Endothelial cell of umbilical vein (primary cell): ENCODE measurements at regions of chr11 and their contacts with region 1.

Region 1: GRCh38 chr11:17347676-17348075 is 3.9 kb upstream of the NCR3LG1 start:
- DNase-seq: no peak
- H3K4me3 ChIP-seq: no peak overlapping the region
- H3K27ac ChIP-seq: no peak overlapping the region
- H3K4me1 ChIP-seq: peaks cover 4% of the 10 kb centered on the region
- H3K27me3 ChIP-seq: no peaks in the 10 kb centered on the region
- CTCF ChIP-seq: no peak
- POLR2A ChIP-seq: no peak

Region 2: GRCh38 chr11:17294033-17294432 is 53.6 kb before region 1 on chr11:
- CTCF ChIA-PET with region 1: no interaction called
- POLR2A ChIA-PET with region 1: interaction called, 12 read pairs
- dilution Hi-C with region 1: no loop called
- intact Hi-C with region 1: no loop called
- DNase-seq: no peak
- H3K4me3 ChIP-seq: no peak overlapping the region
- H3K27ac ChIP-seq: no peak overlapping the region
- H3K4me1 ChIP-seq: no peaks in the 10 kb centered on the region
- H3K27me3 ChIP-seq: no peaks in the 10 kb centered on the region
- CTCF ChIP-seq: no peak
- POLR2A ChIP-seq: no peak